ENCODE measurements at regions of chr13 and their contacts with region 1.

Region 1: DNA sequence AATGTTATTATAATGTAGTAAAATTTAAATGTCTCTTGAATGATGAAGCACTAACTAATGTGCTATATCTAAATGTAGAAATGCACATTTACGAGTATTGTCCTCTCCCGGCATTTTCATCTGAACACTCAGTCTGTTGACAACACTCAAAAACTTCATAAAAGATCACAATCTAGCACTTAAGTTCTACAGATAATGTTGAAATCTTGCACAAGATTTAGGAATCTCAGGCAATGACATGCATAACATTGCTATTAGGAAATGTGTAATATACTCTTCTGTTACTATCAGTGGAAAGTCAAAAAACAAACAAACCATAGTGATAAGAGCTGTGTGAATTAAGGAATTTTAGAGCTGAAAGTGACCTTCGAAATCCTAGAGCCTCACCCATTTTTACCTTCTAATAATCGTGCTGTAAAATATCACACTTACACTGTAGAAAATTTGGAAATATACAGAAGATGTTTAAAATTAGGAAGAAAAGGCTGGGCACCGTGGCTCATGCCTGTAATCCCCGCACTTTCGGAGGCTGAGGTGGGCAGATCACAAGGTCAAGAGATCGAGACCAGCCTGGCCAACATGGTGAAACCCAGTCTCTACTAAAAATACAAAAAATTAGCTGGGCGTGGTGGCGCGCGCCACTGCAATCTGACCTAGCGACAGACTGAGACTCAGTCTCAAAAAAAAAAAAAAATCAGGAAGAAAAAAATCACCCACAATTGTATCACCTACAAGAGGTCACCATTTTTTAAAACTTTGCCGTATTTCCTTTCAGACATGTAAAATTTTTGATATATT is 37.7 kb upstream of the XPO4 start:
- DNase-seq: peak; percentile 83
- ATAC-seq: peak; percentile 18
- H3K4me3 ChIP-seq: no peak overlapping the region
- H3K27ac ChIP-seq: no peak overlapping the region; the same call in 1 of the 2 replicates
- H3K4me1 ChIP-seq: peaks cover 13% of the 10 kb centered on the region
- H3K27me3 ChIP-seq: peaks cover 4% of the 10 kb centered on the region; the same call in 1 of the 2 replicates
- CTCF ChIP-seq: no peak
- POLR2A ChIP-seq: no peak
- RAD21 ChIP-seq: no peak

Region 2: DNA sequence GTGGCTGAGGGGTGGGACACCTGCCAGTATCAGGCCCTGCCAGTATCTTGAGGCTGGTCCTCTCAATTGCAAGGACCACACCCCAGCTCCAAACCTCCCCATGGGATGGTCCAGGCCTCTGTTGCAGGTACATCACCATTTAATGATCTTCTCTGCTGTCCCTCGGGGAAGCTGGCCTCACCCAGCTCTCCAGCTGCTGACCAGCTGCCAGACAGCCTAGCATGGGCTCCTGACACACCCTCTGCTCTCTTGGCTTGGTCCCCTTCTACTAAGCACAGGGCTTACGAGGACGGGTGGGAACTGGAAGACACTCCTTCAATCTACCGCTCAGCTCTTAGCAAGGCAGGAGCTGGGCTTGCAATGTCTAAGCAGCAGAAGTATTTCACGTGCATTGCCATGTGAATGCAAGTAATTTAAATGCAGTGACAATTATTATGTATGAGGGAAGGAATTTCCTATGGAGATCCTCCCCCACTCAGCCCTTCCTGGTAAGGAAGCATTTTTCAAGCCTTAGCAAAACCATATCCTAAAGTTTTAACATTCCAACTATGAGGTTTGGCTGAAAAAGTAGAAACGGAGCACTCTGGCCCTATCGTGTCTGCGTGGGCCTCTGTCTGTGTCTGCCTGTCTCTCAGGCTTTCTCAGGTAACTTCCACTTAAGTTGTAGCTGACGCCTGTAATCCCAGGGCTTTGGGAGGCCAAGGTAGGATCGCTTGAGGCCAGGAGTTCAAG is 57.3 kb after region 1 on chr13:
- CTCF ChIA-PET with region 1: no interaction called
- POLR2A ChIA-PET with region 1: no interaction called
- dilution Hi-C with region 1: no loop called
- in situ Hi-C with region 1: no loop called
- intact Hi-C with region 1: loop called (anchors 1 kb)
- DNase-seq: peak; percentile 98
- ATAC-seq: peak; percentile 87
- H3K4me3 ChIP-seq: no peak overlapping the region
- H3K27ac ChIP-seq: peak overlapping the region; percentile 92
- H3K4me1 ChIP-seq: peaks cover 24% of the 10 kb centered on the region
- H3K27me3 ChIP-seq: no peaks in the 10 kb centered on the region
- CTCF ChIP-seq: no peak
- POLR2A ChIP-seq: no peak
- RAD21 ChIP-seq: peak; percentile 22; the same call in 1 of the 2 replicates

Region 3: GRCh38 chr13:21060987-21061763 is 120.9 kb after region 1 on chr13 and contains the start of gene LATS2:
- CTCF ChIA-PET with region 1: interaction called, 3 read pairs
- POLR2A ChIA-PET with region 1: interaction called, 3 read pairs
- dilution Hi-C with region 1: no loop called
- in situ Hi-C with region 1: no loop called
- intact Hi-C with region 1: loop called (anchors 5 kb)
- DNase-seq: peak; percentile 94
- ATAC-seq: peak; percentile 87
- H3K4me3 ChIP-seq: peak within 1 kb of the TSS; percentile 74
- H3K27ac ChIP-seq: peak within 1 kb of the TSS; percentile 95
- H3K4me1 ChIP-seq: peaks cover 14% of the 10 kb centered on the region
- H3K27me3 ChIP-seq: no peaks in the 10 kb centered on the region
- CTCF ChIP-seq: peak; percentile 20; the same call in 1 of the 2 replicates
- POLR2A ChIP-seq: peak; percentile 93
- RAD21 ChIP-seq: peak; percentile 35
- total RNA-seq, gene LATS2: 12.7 and 16.4 TPM in 2 replicates

Region 4: DNA sequence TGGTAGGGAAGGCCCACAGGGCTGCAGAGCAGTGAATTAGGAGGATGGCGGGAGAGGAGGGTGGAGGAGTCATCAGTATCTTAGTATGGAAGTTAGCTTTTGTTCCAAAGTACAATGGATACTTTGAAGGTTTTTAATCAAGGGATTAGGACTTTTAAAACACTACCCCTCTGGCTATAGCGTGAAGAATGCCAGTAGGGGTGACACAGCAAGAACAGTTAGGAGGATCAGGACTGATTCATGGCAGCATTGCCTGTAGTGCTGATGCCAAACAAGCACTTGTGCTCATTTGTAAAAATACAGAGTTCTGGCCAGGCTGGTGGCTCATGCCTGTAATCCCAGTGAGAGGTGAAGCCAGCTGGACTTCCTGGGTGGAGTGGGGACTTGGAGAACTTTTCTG is 189.8 kb after region 1 on chr13:
- CTCF ChIA-PET with region 1: no interaction called
- POLR2A ChIA-PET with region 1: no interaction called
- dilution Hi-C with region 1: no loop called
- in situ Hi-C with region 1: loop called (anchors 5 kb)
- intact Hi-C with region 1: loop called (anchors 1 kb)
- DNase-seq: no peak
- ATAC-seq: no peak
- H3K4me3 ChIP-seq: no peak overlapping the region
- H3K27ac ChIP-seq: no peak overlapping the region
- H3K4me1 ChIP-seq: peaks cover 1% of the 10 kb centered on the region; the same call in 1 of the 2 replicates
- H3K27me3 ChIP-seq: no peaks in the 10 kb centered on the region
- CTCF ChIP-seq: no peak
- POLR2A ChIP-seq: no peak
- RAD21 ChIP-seq: no peak

Region 5: GRCh38 chr13:21297914-21298831 is 357.9 kb after region 1 on chr13:
- CTCF ChIA-PET with region 1: no interaction called
- POLR2A ChIA-PET with region 1: no interaction called
- dilution Hi-C with region 1: no loop called
- in situ Hi-C with region 1: no loop called
- intact Hi-C with region 1: loop called (anchors 5 kb)
- DNase-seq: peak; percentile 87
- ATAC-seq: peak; percentile 99
- H3K4me3 ChIP-seq: peak overlapping the region; percentile 87
- H3K27ac ChIP-seq: peak overlapping the region; percentile 33; the same call in 1 of the 2 replicates
- H3K4me1 ChIP-seq: no peaks in the 10 kb centered on the region; the same call in 1 of the 2 replicates
- H3K27me3 ChIP-seq: no peaks in the 10 kb centered on the region
- CTCF ChIP-seq: peak; percentile 93
- POLR2A ChIP-seq: no peak
- RAD21 ChIP-seq: peak; percentile 47

Measured in IMR-90 (cell line).